ENCODE measurements at regions of chr3 and their contacts with region 1.

Region 1: DNA sequence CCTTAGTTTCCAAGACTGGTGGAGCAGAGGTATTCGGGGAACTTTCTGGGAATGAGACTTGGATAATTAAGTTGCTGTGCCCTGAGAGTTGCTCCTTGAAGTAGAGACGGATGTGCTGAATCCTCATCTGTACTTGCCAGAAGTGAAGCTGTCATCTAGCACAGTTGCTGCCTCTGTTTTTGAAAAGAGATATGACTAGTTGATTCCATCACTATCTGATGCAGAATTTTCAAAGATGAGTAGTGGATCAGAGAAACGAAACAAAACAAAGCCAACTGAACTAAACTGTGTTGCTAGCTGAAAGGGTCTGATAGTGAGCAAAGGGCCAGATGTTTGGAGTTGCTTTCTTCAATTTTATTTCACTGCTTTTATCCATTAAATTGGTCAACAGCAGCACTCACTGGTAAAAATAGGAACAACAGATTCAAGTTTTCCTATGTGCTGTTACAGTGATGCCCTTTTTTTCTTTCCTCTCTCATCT is 52.7 kb downstream of the MITF start:
- DNase-seq: no peak
- ATAC-seq: peak; percentile 78

Region 2: DNA sequence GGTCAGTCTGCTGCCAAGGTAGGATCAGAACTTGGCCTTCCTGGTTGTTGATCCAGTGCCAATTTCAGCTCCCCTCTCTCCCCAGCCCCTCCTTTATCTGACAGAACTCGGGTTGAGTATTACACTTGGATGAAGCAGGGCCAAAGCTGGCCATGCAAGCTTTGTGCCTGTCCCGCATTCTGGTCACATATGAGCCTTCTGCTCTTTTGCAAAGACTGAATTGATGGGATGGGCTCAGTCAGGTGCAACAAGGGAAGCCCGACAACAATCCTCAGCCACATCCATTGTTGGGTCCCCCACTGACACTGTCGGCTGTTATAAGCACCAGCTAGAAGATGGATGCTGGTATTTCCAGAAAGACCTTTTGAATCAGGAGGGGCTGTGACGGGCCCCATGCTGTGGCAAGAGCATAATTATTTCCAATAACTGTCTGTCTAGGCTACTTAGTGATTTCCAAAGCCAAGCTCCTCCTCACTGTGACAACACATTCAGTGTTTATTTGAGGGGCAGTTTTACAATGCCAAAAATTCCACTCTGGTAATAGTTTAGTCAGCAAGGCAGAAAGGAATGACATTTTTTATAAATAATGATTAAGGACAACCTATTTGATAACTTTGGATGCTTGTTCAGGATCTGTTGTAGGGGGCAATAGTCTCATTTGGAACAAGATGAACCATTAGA is 259.3 kb before region 1 on chr3:
- intact Hi-C with region 1: no loop called
- DNase-seq: no peak
- ATAC-seq: peak; percentile 35

Region 3: GRCh38 chr3:69628951-69629350 is 163.0 kb before region 1 on chr3:
- intact Hi-C with region 1: no loop called
- DNase-seq: no peak
- ATAC-seq: no peak

Region 4: GRCh38 chr3:69948246-69948862 is 156.4 kb after region 1 on chr3:
- intact Hi-C with region 1: loop called (anchors 10 kb)
- DNase-seq: no peak
- ATAC-seq: peak; percentile 8

Region 5: GRCh38 chr3:70606018-70606417 is 814.1 kb after region 1 on chr3:
- intact Hi-C with region 1: no loop called
- DNase-seq: no peak
- ATAC-seq: no peak

Measured in Right ventricle myocardium superior (tissue), 1 donor.